Activated naive CD4-positive, alpha-beta T cell treated with anti-CD3 and anti-CD28 coated beads for 36 hours (primary cell): ENCODE measurements at regions of chr6 and their contacts with region 1.

Region 1: GRCh38 chr6:24666641-24667377 is at the starts of genes ACOT13 and TDP2:
- DNase-seq: peak; percentile 97
- H3K4me3 Mint-ChIP-seq: peak within 1 kb of the TSS; percentile 90
- H3K27ac Mint-ChIP-seq: peak within 1 kb of the TSS; percentile 95
- H3K4me1 Mint-ChIP-seq: peaks cover 35% of the 10 kb centered on the region
- H3K27me3 Mint-ChIP-seq: no peaks in the 10 kb centered on the region
- total RNA-seq, gene ACOT13: 34.0 to 36.1 TPM
- total RNA-seq, gene TDP2: 41.5 to 44.2 TPM

Region 2: GRCh38 chr6:24402697-24403501 is 263.9 kb before region 1 on chr6 and contains the start of gene MRS2:
- CTCF ChIA-PET with region 1: no interaction called
- intact Hi-C with region 1: loop called (anchors 5 kb)
- DNase-seq: peak; percentile 76
- H3K4me3 Mint-ChIP-seq: peak within 1 kb of the TSS; percentile 86
- H3K27ac Mint-ChIP-seq: peak within 1 kb of the TSS; percentile 36
- H3K4me1 Mint-ChIP-seq: peaks cover 30% of the 10 kb centered on the region
- H3K27me3 Mint-ChIP-seq: peaks cover 9% of the 10 kb centered on the region
- total RNA-seq, gene MRS2: 18.9 to 19.8 TPM

Region 3: DNA sequence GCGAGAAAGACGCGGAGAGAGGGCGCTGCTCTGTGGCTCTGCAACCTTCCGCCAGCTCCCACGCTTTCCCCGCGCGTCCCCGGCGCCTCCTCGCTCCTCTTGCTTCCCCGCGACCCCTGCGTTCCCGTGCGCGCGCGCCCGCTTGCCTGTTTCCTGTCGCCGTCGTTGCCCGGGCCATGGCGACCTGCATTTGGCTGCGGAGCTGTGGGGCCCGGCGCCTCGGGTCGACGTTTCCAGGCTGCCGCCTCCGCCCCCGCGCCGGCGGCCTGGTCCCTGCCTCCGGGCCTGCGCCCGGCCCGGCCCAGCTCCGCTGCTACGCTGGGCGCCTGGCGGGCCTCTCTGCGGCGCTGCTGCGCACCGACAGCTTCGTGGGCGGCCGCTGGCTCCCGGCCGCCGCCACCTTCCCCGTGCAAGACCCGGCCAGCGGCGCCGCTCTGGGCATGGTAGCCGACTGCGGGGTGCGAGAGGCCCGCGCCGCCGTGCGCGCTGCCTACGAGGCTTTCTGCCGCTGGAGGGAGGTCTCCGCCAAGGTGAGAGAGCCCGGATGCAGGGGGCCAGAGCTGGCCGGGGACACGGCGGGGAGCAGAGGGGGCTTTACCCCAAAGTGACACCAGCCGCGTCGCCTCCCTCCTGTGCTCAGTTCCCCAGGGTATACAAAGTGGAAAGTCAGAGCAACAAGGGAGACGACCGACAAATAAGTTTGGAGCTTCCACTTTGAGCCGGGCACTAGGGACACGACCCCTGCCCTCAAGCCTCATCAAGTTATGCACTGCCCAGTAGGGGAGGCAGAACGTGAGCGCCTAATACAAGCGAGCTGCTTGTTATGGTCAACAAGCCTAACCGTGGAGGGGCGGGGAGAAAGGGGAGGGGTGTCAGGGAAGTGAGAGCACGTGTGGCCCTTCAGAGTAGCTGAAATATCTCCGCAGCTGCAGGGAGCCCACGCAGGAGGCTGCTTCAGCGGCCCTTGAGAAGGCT is 171.7 kb before region 1 on chr6 and contains the start of gene ALDH5A1:
- CTCF ChIA-PET with region 1: interaction called, 4 read pairs
- intact Hi-C with region 1: loop called (anchors 1 kb)
- DNase-seq: peak; percentile 87
- H3K4me3 Mint-ChIP-seq: peak within 1 kb of the TSS; percentile 79
- H3K27ac Mint-ChIP-seq: peak within 1 kb of the TSS; percentile 19
- H3K4me1 Mint-ChIP-seq: peaks cover 14% of the 10 kb centered on the region
- H3K27me3 Mint-ChIP-seq: no peaks in the 10 kb centered on the region
- total RNA-seq, gene ALDH5A1: 15.8 to 16.8 TPM

Region 4: GRCh38 chr6:24646782-24647181 is 20.0 kb before region 1 on chr6:
- CTCF ChIA-PET with region 1: interaction called, 4 read pairs
- intact Hi-C with region 1: loop called (anchors 1 kb)
- DNase-seq: no peak
- H3K4me3 Mint-ChIP-seq: peak overlapping the region; percentile 84
- H3K27ac Mint-ChIP-seq: no peak overlapping the region
- H3K4me1 Mint-ChIP-seq: peaks cover 13% of the 10 kb centered on the region
- H3K27me3 Mint-ChIP-seq: peaks cover 13% of the 10 kb centered on the region

Region 5: DNA sequence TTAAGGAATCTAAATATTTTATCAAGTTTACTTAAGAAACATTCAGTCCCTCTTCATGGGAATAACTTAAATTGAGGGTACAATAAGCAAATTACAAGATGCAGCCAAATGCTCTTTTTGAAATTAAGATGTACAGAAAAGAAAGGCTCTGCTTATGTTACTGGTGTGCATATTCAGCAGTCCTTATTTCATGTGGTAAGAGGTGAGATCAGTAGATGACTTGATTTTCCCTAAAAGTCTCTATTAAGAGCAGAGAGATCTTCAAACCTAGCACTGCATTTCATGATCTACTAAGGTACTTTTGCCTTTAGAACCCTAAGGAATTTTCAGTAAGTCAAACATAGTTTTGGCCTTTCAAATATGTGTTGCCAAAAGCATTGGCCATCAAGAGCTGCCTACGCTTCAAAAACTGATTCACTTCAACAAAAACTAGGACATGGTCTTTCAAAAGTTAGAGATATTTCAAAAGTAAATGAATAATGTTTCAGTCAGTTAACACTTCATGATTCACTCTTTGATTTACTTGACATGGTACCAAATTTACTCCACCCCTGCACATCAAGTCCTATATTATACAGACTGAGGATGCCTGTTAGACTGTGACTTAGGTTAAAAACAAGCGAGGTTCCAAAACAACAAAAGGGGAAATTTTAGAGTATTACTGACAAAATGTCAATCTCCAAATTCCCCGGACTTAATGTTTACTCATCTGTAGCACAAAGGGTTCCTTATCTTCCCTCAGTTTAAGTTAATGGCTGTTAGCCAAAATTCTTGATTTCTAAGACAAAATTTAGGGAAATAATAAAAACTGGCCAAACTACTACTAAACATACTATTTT is 32.9 kb after region 1 on chr6:
- CTCF ChIA-PET with region 1: no interaction called
- intact Hi-C with region 1: loop called (anchors 1 kb)
- DNase-seq: no peak
- H3K4me3 Mint-ChIP-seq: no peak overlapping the region
- H3K27ac Mint-ChIP-seq: peak overlapping the region; percentile 84
- H3K4me1 Mint-ChIP-seq: peaks cover 45% of the 10 kb centered on the region
- H3K27me3 Mint-ChIP-seq: no peaks in the 10 kb centered on the region

Region 6: DNA sequence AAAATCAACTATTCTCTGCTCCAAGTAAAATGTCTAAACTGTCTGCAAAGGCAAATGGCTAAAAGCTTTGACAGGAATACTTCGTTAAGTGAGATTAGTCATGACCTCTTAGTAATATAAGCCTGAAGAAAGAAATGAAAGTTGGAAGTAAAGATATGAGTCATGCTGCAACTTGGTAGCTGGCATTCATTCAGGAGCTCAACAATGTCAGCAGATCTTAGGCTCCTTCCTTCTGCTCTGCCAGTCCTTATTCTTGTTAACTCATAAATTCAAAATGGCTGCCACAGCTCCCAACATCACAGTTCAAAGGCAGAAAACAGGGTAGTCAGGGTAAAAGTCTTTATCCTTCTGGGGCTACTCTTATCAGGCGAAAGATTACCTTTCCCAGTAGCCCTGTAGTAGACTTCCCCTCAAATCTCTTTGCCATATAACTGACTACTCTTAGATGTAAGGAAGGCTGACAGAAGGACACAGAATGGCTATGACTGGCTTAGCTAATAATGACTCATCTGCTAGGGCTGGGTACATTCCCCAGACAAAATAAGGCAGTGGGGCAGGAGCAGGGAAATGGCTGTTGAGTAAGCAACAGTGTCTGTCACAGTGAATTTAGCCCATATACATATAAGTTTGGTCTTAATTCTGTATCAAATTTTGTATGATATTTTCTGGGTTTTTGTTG is 76.6 kb after region 1 on chr6:
- CTCF ChIA-PET with region 1: interaction called, 3 read pairs
- intact Hi-C with region 1: loop called (anchors 2 kb)
- DNase-seq: peak; percentile 75
- H3K4me3 Mint-ChIP-seq: peak overlapping the region; percentile 13
- H3K27ac Mint-ChIP-seq: peak overlapping the region; percentile 88
- H3K4me1 Mint-ChIP-seq: peaks cover 28% of the 10 kb centered on the region
- H3K27me3 Mint-ChIP-seq: peaks cover 4% of the 10 kb centered on the region